ENCODE measurements at regions of chr5 and their contacts with region 1.

Region 1: GRCh38 chr5:373710-374602 is 52.4 kb downstream of the AHRR start:
- DNase-seq: peak; percentile 58
- ATAC-seq: peak; percentile 64
- H3K4me3 Mint-ChIP-seq: peak overlapping the region; percentile 46
- H3K27ac Mint-ChIP-seq: peak overlapping the region; percentile 66
- H3K4me1 Mint-ChIP-seq: peaks cover 11% of the 10 kb centered on the region
- H3K27me3 Mint-ChIP-seq: peaks cover 24% of the 10 kb centered on the region
- CTCF ChIP-seq: no peak

Region 2: DNA sequence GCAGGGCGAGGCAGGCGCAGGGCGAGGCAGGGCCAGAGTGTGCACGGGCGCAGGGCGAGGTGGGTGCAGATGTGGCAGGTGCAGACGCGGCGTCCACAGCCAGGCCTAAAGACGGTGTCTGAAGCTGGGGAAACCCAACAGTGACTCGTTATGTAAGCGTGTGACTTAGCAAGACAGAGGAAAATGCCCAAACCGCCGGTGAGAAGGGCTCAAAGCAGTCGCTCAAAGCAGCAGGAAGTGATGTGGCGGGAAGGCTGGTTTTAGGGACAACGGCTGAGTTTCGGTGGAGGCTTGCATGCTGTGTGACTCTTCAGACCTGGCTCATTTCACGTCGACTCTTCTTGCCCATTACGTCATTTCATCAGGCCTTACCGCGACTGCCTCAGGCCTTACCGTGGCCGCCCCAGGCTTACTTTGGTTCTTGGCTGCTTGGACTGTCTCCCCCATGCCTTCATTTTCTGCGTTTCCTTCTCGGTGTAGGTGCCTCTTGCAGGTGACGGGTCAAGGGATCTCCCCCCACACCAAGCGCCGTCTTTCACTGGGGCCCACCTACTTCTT is 18.6 kb after region 1 on chr5:
- CTCF ChIA-PET with region 1: no interaction called
- POLR2A ChIA-PET with region 1: interaction called, 4 read pairs
- intact Hi-C with region 1: loop called (anchors 2 kb)
- DNase-seq: no peak
- ATAC-seq: peak; percentile 80
- H3K4me3 Mint-ChIP-seq: no peak overlapping the region
- H3K27ac Mint-ChIP-seq: peak overlapping the region; percentile 47
- H3K4me1 Mint-ChIP-seq: peaks cover 11% of the 10 kb centered on the region
- H3K27me3 Mint-ChIP-seq: peaks cover 7% of the 10 kb centered on the region
- CTCF ChIP-seq: no peak

Measured in activated B cell treated with CpG ODN at 0.5 μM for 24 hours (primary cell).